ENCODE measurements at regions of chr12 and their contacts with region 1.

Region 1: GRCh38 chr12:11758510-11759493 is 109.3 kb downstream of the ETV6 start:
- DNase-seq: peak; percentile 67 to 83 (median 76)
- H3K4me3 ChIP-seq: peak overlapping the region in 2 of 3 experiments; percentile 25 to 30
- H3K4me3 Mint-ChIP-seq: peak overlapping the region; percentile 50 to 57
- H3K27ac ChIP-seq: peak overlapping the region; percentile 81 to 90
- H3K27ac Mint-ChIP-seq: peak overlapping the region; percentile 91 to 98 (median 96)
- H3K4me1 ChIP-seq: peaks cover 57 to 81% of the 10 kb centered on the region in 2 donors
- H3K4me1 Mint-ChIP-seq: peaks cover 75% of the 10 kb centered on the region
- H3K27me3 ChIP-seq: no peaks in the 10 kb centered on the region
- H3K27me3 Mint-ChIP-seq: no peaks in the 10 kb centered on the region
- CTCF ChIP-seq: no peak

Region 2: DNA sequence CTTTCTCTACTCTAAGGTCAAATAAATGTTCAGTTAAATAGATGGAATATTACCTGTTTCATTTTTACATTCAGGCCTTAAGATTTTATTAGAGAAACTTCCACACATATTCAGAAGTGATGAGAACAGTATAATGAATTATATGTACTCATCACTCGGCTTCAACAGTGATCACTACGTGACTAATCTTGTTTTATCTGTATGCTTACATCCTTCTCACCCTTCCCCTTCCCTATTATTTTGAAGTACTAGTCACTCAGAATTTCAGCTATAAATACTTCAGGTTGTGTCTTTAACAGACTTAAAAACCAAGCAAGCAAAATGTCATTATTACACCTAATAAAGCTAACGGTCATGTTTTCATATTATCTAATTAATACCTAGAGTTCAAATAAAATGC is 74.4 kb before region 1 on chr12:
- intact Hi-C with region 1: loop called in 1 of 2 experiments (anchors 2 kb)
- DNase-seq: peak; percentile 56 to 79 (median 78)
- H3K4me3 ChIP-seq: peak overlapping the region in 1 of 3 experiments; percentile 50
- H3K4me3 Mint-ChIP-seq: no peak overlapping the region
- H3K27ac ChIP-seq: peak overlapping the region; percentile 88 to 93
- H3K27ac Mint-ChIP-seq: peak overlapping the region; percentile 87 to 97 (median 95)
- H3K4me1 ChIP-seq: peaks cover 53 to 60% of the 10 kb centered on the region in 2 donors
- H3K4me1 Mint-ChIP-seq: peaks cover 85% of the 10 kb centered on the region
- H3K27me3 ChIP-seq: no peaks in the 10 kb centered on the region
- H3K27me3 Mint-ChIP-seq: peaks cover 0 to 2% (median 0%) of the 10 kb centered on the region in 3 donors
- CTCF ChIP-seq: no peak

Region 3: DNA sequence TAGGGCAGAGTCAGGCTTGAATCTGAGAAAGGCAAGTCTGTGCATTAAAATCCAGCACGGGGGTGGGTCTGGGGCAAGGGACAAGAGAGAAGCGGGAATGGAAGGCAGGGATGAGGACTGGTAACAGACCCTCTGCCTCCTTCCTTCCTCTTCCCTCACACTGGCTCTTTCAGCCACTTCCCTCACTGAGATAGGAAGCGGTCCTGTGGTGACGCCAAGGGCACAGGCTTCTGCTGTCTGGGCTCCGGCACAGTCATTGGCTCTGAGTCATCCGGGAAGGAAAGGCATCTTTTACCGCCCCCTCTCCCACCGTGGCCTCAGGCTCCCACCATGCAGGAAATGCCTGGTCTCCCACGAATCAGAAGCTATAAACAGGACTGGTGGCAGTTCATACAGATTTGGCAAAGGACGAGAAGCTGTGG is 39.1 kb before region 1 on chr12:
- intact Hi-C with region 1: loop called in 1 of 2 experiments (anchors 5 kb)
- DNase-seq: peak; percentile 92 to 97 (median 96)
- H3K4me3 ChIP-seq: peak overlapping the region in 1 of 3 experiments; percentile 16
- H3K4me3 Mint-ChIP-seq: peak overlapping the region; percentile 42 to 69
- H3K27ac ChIP-seq: peak overlapping the region; percentile 52 to 89
- H3K27ac Mint-ChIP-seq: peak overlapping the region; percentile 86 to 95 (median 92)
- H3K4me1 ChIP-seq: peaks cover 41 to 44% of the 10 kb centered on the region in 2 donors
- H3K4me1 Mint-ChIP-seq: peaks cover 75% of the 10 kb centered on the region
- H3K27me3 ChIP-seq: no peaks in the 10 kb centered on the region
- H3K27me3 Mint-ChIP-seq: peaks cover 0 to under 1% (median 0%) of the 10 kb centered on the region in 3 donors
- CTCF ChIP-seq: no peak

Region 4: GRCh38 chr12:11805043-11805442 is 46.2 kb after region 1 on chr12:
- intact Hi-C with region 1: no loop called
- DNase-seq: peak in 2 of 3 donors; percentile 29 to 44
- H3K4me3 ChIP-seq: no peak overlapping the region
- H3K4me3 Mint-ChIP-seq: no peak overlapping the region
- H3K27ac ChIP-seq: peak overlapping the region in 1 of 2 donors; percentile 63
- H3K27ac Mint-ChIP-seq: peak overlapping the region in 4 of 7 donors; percentile 8 to 84 (median 39)
- H3K4me1 ChIP-seq: peaks cover 32 to 51% of the 10 kb centered on the region in 2 donors
- H3K4me1 Mint-ChIP-seq: peaks cover 69% of the 10 kb centered on the region
- H3K27me3 ChIP-seq: no peaks in the 10 kb centered on the region
- H3K27me3 Mint-ChIP-seq: peaks cover 0 to 2% (median 0%) of the 10 kb centered on the region in 3 donors
- CTCF ChIP-seq: peak; percentile 60

Measured in CD14-positive monocyte (primary cell).